K562 (cell line): ENCODE measurements at regions of chr4 and their contacts with region 1.

Region 1: GRCh38 chr4:10403633-10404445 is 53.4 kb downstream of the ZNF518B start:
- DNase-seq: peak; percentile 33 to 79 (median 48)
- ATAC-seq: peak; percentile 94
- H3K4me3 ChIP-seq: no peak overlapping the region
- H3K27ac ChIP-seq: peak overlapping the region; percentile 61
- H3K4me1 ChIP-seq: peaks cover 0 to 16% of the 10 kb centered on the region in 2 experiments; a peak in 3 of 5 replicates
- H3K27me3 ChIP-seq: no peaks in the 10 kb centered on the region
- CTCF ChIP-seq: peak; percentile 65 to 87 (median 74)
- EP300 ChIP-seq: no peak; the same call in 1 of the 2 replicates
- POLR2A ChIP-seq: no peak
- RAD21 ChIP-seq: peak; percentile 98 to 99

Region 2: GRCh38 chr4:8744083-8744805 is 1659.6 kb before region 1 on chr4:
- CTCF ChIA-PET with region 1: no interaction called
- POLR2A ChIA-PET with region 1: no interaction called
- in situ Hi-C with region 1: no loop called
- intact Hi-C with region 1: no loop called
- DNase-seq: peak in 3 of 4 experiments; percentile 19 to 30 (median 23)
- ATAC-seq: peak; percentile 46; the same call in 1 of the 3 replicates
- H3K4me3 ChIP-seq: no peak overlapping the region
- H3K27ac ChIP-seq: no peak overlapping the region
- H3K4me1 ChIP-seq: no peaks in the 10 kb centered on the region
- H3K27me3 ChIP-seq: peaks cover 0 to 28% of the 10 kb centered on the region in 2 experiments; a peak in 3 of 5 replicates
- CTCF ChIP-seq: peak in 1 of 3 experiments; percentile 20; a peak in 1 of 6 replicates
- EP300 ChIP-seq: no peak
- POLR2A ChIP-seq: no peak
- RAD21 ChIP-seq: no peak

Region 3: DNA sequence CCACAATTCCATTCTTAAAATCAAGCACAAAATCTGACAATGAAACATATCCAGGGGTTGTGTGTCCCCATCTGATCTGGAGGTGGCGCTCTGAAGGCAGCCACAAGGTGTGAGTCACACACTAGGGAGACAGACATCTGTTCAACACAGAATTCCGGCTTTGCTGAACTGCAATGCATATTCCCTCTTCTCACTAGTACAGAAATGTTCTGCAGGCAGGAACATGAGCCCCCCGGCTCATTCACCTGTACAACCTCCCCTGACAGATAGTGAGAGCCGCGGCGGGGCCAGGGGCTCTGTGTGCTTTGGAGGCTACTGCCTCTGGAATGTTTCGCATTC is 329.1 kb before region 1 on chr4:
- CTCF ChIA-PET with region 1: no interaction called
- POLR2A ChIA-PET with region 1: no interaction called
- in situ Hi-C with region 1: no loop called
- intact Hi-C with region 1: loop called (anchors 5 kb)
- DNase-seq: peak; percentile 37 to 44 (median 42)
- ATAC-seq: peak; percentile 77
- H3K4me3 ChIP-seq: no peak overlapping the region
- H3K27ac ChIP-seq: no peak overlapping the region
- H3K4me1 ChIP-seq: peaks cover 0 to 7% of the 10 kb centered on the region in 2 experiments; a peak in 2 of 5 replicates
- H3K27me3 ChIP-seq: no peaks in the 10 kb centered on the region; a peak in 1 of 5 replicates
- CTCF ChIP-seq: peak; percentile 46 to 71 (median 65)
- EP300 ChIP-seq: no peak
- POLR2A ChIP-seq: peak; percentile 29; the same call in 1 of the 2 replicates
- RAD21 ChIP-seq: peak in 1 of 2 experiments; percentile 35; a peak in 1 of 4 replicates

Region 4: GRCh38 chr4:10157478-10158332 is 246.1 kb before region 1 on chr4:
- CTCF ChIA-PET with region 1: interaction called, 32 read pairs
- POLR2A ChIA-PET with region 1: interaction called, 3 read pairs
- in situ Hi-C with region 1: no loop called
- intact Hi-C with region 1: loop called (anchors 1 kb)
- DNase-seq: peak; percentile 79 to 83 (median 81)
- ATAC-seq: peak; percentile 85
- H3K4me3 ChIP-seq: no peak overlapping the region
- H3K27ac ChIP-seq: no peak overlapping the region
- H3K4me1 ChIP-seq: peaks cover 0 to 11% of the 10 kb centered on the region in 2 experiments; a peak in 3 of 5 replicates
- H3K27me3 ChIP-seq: peaks cover 2 to 7% of the 10 kb centered on the region in 2 experiments; a peak in 1 of 5 replicates
- CTCF ChIP-seq: peak; percentile 87 to 94 (median 92)
- EP300 ChIP-seq: no peak
- POLR2A ChIP-seq: no peak
- RAD21 ChIP-seq: peak; percentile 87 to 96

Region 5: DNA sequence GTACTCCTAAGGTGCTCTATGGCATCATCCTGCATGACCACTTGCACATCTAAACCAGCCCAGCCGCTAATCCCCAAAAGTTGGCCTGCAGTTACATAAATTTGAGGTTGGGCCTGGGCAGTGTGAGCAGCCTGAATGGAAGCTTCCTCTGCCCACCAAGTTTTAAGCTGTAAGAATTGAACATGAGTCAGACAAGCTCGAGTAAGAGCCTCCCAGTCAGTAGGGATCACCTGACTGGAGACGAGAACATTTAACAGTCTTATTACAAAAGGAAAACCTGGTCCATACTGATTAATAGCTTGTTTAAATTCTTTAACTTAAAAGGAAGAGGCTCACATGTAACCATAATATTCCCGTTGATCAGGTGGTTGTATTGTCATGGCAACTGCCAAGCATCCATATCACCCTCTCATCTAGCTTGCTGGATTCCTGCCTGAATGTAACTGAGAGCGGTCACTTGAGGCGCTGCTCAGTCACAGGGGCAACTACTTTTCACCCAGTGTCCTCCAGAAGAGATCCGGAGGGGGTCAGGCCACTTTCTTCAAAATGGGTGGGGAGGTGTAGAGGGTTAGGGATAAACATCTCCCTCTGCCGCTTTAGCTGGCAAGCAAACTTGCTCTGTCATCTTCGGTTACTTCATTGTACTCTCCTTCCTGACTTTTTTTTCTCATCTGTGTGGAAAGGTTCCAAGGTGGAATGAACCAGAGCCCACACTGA is 230.6 kb before region 1 on chr4:
- CTCF ChIA-PET with region 1: interaction called, 5 read pairs
- POLR2A ChIA-PET with region 1: interaction called, 5 read pairs
- in situ Hi-C with region 1: loop called (anchors 5 kb)
- intact Hi-C with region 1: loop called (anchors 1 kb)
- DNase-seq: peak; percentile 83 to 96 (median 86)
- ATAC-seq: peak; percentile 90
- H3K4me3 ChIP-seq: no peak overlapping the region; the same call in 1 of the 2 replicates
- H3K27ac ChIP-seq: peak overlapping the region; percentile 93
- H3K4me1 ChIP-seq: peaks cover 27 to 76% of the 10 kb centered on the region in 2 experiments
- H3K27me3 ChIP-seq: no peaks in the 10 kb centered on the region
- CTCF ChIP-seq: peak; percentile 90 to 97 (median 92)
- EP300 ChIP-seq: peak; percentile 95
- POLR2A ChIP-seq: no peak
- RAD21 ChIP-seq: peak; percentile 89 to 90

Region 6: DNA sequence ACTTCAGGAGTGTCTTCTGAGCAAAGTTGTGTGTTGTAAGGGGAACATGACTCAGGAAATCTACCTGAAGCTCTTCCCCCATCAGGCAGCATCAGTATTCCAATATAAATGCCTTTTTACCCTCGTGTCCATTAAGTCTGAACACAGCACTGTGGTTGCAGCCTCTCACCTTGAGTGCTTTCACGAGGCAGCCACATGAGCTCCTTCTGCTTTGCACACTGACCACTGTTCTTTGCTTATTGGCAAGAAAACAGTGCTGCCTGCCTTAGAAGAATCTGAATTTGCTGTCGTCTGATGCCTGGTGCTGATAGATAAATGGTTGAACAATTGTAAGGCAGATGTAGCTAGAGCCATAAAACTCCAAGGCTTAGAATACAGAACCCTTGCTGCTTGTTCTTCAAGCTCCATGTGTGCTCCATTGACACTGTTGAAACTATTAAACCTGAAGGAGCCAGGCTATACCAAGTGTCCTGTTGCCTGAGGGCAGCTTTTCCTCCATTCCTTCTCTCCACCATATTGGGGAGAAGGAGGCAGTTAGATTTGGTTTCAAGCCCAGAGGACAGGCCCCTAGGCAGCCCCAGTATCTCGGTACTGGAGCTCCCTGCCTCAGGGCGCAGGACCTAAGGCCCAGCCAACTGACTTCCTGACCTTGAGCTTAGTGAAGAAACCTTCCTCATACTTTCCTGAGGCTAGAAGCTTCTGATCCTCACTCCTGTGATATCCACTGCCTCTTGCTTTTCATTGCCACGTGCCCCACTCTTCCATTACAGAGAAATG is 147.4 kb before region 1 on chr4:
- CTCF ChIA-PET with region 1: no interaction called
- POLR2A ChIA-PET with region 1: no interaction called
- in situ Hi-C with region 1: no loop called
- intact Hi-C with region 1: loop called (anchors 5 kb)
- DNase-seq: no peak
- ATAC-seq: peak; percentile 14; the same call in 1 of the 3 replicates
- H3K4me3 ChIP-seq: no peak overlapping the region
- H3K27ac ChIP-seq: no peak overlapping the region
- H3K4me1 ChIP-seq: peaks cover 0 to 9% of the 10 kb centered on the region in 2 experiments; a peak in 3 of 5 replicates
- H3K27me3 ChIP-seq: no peaks in the 10 kb centered on the region
- CTCF ChIP-seq: no peak
- EP300 ChIP-seq: no peak
- POLR2A ChIP-seq: no peak
- RAD21 ChIP-seq: no peak

Region 7: DNA sequence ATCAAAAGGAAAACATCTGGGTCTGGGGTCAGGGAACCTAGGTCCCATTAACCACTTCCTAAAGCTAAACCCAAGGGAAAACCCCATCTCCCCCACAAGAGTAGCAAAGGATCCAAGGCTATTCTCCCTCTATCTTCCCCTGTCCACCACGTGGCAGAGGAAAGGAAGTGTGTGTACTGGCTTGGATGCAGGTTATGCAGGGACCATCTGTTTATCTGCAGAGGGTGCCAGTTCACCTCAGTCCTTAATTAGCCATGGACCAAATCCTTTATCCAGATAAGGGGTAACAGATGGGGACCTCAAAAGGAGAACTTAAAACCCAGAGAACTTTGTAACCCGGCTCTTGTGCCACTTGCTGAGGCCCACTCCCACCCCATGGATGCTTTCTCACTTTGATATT is 81.9 kb before region 1 on chr4:
- CTCF ChIA-PET with region 1: no interaction called
- POLR2A ChIA-PET with region 1: interaction called, 3 read pairs
- in situ Hi-C with region 1: no loop called
- intact Hi-C with region 1: loop called (anchors 5 kb)
- DNase-seq: peak in 2 of 4 experiments; percentile 24 to 25
- ATAC-seq: no peak
- H3K4me3 ChIP-seq: no peak overlapping the region
- H3K27ac ChIP-seq: no peak overlapping the region
- H3K4me1 ChIP-seq: peaks cover 9 to 47% of the 10 kb centered on the region in 2 experiments; a peak in 4 of 5 replicates
- H3K27me3 ChIP-seq: no peaks in the 10 kb centered on the region
- CTCF ChIP-seq: no peak
- EP300 ChIP-seq: no peak
- POLR2A ChIP-seq: no peak
- RAD21 ChIP-seq: 0 out of 4 replicates have a peak, but pooled peaks of 1 of the 2 experiments have one; percentile 18

Region 8: DNA sequence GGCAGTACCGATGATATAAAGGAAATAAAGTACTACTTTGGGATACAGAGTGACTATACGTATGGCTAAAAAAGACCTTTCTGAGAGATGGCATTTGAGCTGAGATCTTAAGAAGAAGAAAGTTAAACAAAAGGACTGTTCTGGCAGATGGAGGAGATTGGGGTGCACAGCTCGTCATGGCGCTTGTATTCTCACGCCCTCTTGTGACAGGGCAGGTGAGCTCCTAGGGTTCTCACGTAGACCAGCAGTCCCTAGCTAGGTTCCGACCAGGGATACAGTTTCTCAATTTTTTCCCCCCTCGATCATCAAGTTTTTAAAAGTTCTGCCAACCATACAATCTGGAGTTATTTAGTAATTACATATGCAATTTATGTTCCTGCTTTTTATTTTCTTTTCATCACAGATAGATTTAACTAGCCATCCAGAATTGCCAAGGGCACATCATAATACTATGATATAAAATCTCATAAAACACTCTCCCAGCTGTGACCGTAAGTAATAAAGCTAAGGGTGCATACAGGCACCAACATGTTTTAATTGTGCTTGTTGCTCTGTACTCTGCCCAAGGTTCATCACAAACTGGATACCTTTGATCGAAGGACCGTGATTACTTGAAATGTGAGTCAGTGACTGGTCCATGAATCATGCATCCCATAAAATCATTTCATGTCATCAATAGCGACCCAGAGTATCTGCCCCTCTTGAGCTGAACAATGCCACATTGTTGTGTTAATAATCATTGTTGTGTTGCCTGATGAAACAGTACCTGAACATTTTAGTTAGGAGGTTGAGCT is 122.8 kb after region 1 on chr4:
- CTCF ChIA-PET with region 1: no interaction called
- POLR2A ChIA-PET with region 1: no interaction called
- in situ Hi-C with region 1: no loop called
- intact Hi-C with region 1: loop called (anchors 5 kb)
- DNase-seq: peak in 3 of 4 experiments; percentile 11 to 42 (median 38)
- ATAC-seq: peak; percentile 92
- H3K4me3 ChIP-seq: no peak overlapping the region
- H3K27ac ChIP-seq: no peak overlapping the region
- H3K4me1 ChIP-seq: no peaks in the 10 kb centered on the region; a peak in 2 of 5 replicates
- H3K27me3 ChIP-seq: peaks cover 0 to 4% of the 10 kb centered on the region in 2 experiments; a peak in 2 of 5 replicates
- CTCF ChIP-seq: peak; percentile 46 to 59 (median 51); a peak in 5 of 6 replicates
- EP300 ChIP-seq: no peak
- POLR2A ChIP-seq: no peak
- RAD21 ChIP-seq: peak; percentile 56 to 69; a peak in 3 of 4 replicates

Region 9: DNA sequence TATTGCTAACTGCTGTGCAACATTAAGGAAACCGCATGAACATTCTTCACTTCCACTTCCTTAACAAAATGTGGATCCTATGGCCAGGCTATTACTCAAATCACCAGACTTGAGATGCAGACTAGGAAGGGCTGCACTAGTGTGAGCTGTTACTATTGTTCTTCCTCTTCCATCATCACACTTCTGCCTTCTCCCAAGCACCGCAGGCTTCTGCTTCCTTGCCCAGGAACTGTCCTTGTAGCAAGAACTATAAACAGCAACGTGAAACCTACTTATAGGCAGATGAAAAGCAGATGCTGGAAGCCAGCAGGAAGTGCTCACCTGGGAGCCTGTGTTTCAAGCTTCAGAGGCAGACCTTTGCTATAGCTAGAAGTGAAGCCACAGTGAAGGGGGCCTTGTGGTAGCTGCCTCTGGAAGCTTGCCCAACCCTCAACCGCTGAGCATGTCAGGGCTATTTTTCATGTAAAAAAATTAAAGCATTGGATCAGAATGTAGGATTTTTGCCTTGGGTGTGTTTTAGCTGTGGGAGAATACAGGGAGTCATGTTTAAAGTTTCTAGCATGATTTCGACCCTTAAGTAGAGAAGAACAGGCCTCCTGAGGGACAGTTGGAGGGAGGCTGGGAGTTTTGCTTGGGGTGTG is 236.8 kb after region 1 on chr4:
- CTCF ChIA-PET with region 1: no interaction called
- POLR2A ChIA-PET with region 1: no interaction called
- in situ Hi-C with region 1: no loop called
- intact Hi-C with region 1: no loop called
- DNase-seq: no peak
- ATAC-seq: no peak
- H3K4me3 ChIP-seq: no peak overlapping the region
- H3K27ac ChIP-seq: no peak overlapping the region
- H3K4me1 ChIP-seq: no peaks in the 10 kb centered on the region
- H3K27me3 ChIP-seq: no peaks in the 10 kb centered on the region
- CTCF ChIP-seq: no peak
- EP300 ChIP-seq: no peak
- POLR2A ChIP-seq: no peak
- RAD21 ChIP-seq: no peak